ENCODE measurements at regions of chr6 and their contacts with region 1.

Region 1: GRCh38 chr6:89371849-89372505 is 19.5 kb upstream of the UBE2J1 start:
- DNase-seq: peak; percentile 90
- ATAC-seq: peak; percentile 88
- H3K4me3 ChIP-seq: no peak overlapping the region
- H3K4me3 Mint-ChIP-seq: peak overlapping the region; percentile 18
- H3K27ac ChIP-seq: peak overlapping the region; percentile 17 to 18
- H3K27ac Mint-ChIP-seq: peak overlapping the region; percentile 53
- H3K4me1 ChIP-seq: peaks cover 23 to 37% of the 10 kb centered on the region in 2 donors
- H3K4me1 Mint-ChIP-seq: peaks cover 39% of the 10 kb centered on the region
- H3K27me3 ChIP-seq: no peaks in the 10 kb centered on the region
- H3K27me3 Mint-ChIP-seq: no peaks in the 10 kb centered on the region
- CTCF ChIP-seq: peak; percentile 98

Region 2: DNA sequence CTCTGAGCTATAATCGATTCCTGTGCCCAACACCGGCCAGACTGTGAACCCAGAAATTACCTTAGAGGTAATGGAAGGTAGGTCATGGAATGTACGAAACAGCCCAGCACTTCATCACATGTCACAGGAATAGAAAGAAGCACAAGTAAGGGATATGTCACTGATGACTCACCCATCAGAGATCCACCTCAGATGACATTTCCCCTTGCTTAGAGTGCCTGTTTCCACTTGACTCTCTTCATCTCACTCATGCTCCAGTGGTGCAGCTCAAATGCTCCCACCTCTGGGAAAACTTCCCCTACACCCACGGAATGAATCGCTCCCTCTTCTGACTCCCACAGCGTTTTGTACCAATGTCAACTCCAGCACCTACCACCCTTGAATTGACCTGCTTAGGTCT is 824.2 kb before region 1 on chr6:
- CTCF ChIA-PET with region 1: no interaction called
- POLR2A ChIA-PET with region 1: no interaction called
- intact Hi-C with region 1: no loop called
- DNase-seq: no peak
- ATAC-seq: no peak
- H3K4me3 ChIP-seq: no peak overlapping the region
- H3K4me3 Mint-ChIP-seq: no peak overlapping the region
- H3K27ac ChIP-seq: no peak overlapping the region
- H3K27ac Mint-ChIP-seq: no peak overlapping the region
- H3K4me1 ChIP-seq: peaks cover 5 to 6% of the 10 kb centered on the region in 2 donors
- H3K4me1 Mint-ChIP-seq: peaks cover 5% of the 10 kb centered on the region
- H3K27me3 ChIP-seq: no peaks in the 10 kb centered on the region
- H3K27me3 Mint-ChIP-seq: no peaks in the 10 kb centered on the region
- CTCF ChIP-seq: no peak

Region 3: GRCh38 chr6:88843040-88843439 is 528.9 kb before region 1 on chr6:
- CTCF ChIA-PET with region 1: no interaction called
- POLR2A ChIA-PET with region 1: no interaction called
- intact Hi-C with region 1: no loop called
- DNase-seq: no peak
- ATAC-seq: no peak
- H3K4me3 ChIP-seq: no peak overlapping the region
- H3K4me3 Mint-ChIP-seq: no peak overlapping the region
- H3K27ac ChIP-seq: no peak overlapping the region
- H3K27ac Mint-ChIP-seq: no peak overlapping the region
- H3K4me1 ChIP-seq: no peaks in the 10 kb centered on the region
- H3K4me1 Mint-ChIP-seq: no peaks in the 10 kb centered on the region
- H3K27me3 ChIP-seq: no peaks in the 10 kb centered on the region
- H3K27me3 Mint-ChIP-seq: no peaks in the 10 kb centered on the region
- CTCF ChIP-seq: no peak

Region 4: DNA sequence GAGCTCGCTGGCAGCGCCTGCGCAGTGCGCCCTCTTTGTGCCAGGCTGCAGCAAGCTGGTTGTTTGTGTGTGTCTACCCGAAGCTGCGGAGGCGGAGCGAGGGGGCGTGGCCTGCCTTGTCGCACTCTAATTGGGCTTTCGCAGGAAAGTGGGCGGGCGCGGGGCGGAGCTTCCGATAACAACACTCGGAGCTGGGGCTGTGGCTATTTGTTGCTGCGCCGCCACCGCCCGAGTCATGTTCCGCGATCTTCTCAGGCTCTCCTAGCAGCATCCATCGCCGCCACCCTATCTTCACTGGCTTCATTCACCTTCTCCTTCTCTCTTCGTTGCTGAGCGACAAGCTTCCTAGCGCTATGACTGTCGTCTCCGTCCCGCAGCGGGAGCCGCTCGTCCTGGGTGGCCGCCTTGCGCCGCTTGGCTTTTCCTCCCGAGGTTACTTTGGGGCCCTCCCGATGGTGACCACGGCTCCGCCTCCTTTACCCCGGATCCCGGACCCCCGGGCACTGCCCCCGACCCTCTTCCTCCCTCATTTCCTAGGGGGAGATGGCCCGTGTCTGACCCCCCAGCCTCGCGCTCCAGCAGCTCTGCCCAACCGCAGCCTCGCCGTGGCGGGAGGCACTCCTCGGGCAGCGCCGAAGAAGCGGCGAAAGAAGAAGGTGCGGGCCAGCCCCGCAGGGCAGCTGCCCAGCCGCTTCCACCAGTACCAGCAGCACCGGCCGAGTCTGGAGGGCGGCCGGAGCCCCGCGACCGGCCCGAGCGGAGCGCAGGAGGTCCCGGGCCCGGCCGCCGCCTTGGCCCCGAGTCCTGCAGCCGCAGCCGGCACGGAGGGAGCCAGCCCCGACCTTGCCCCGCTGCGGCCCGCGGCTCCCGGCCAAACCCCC is 291.2 kb before region 1 on chr6 and contains the start of gene PNRC1:
- CTCF ChIA-PET with region 1: interaction called, 8 read pairs
- POLR2A ChIA-PET with region 1: no interaction called
- intact Hi-C with region 1: loop called (anchors 5 kb)
- DNase-seq: peak; percentile 100
- ATAC-seq: peak; percentile 76
- H3K4me3 ChIP-seq: peak within 1 kb of the TSS; percentile 81 to 100 (median 98)
- H3K4me3 Mint-ChIP-seq: peak within 1 kb of the TSS; percentile 99
- H3K27ac ChIP-seq: peak within 1 kb of the TSS; percentile 99
- H3K27ac Mint-ChIP-seq: peak within 1 kb of the TSS; percentile 98
- H3K4me1 ChIP-seq: peaks cover 25 to 29% of the 10 kb centered on the region in 2 donors
- H3K4me1 Mint-ChIP-seq: peaks cover 38% of the 10 kb centered on the region
- H3K27me3 ChIP-seq: no peaks in the 10 kb centered on the region
- H3K27me3 Mint-ChIP-seq: no peaks in the 10 kb centered on the region
- CTCF ChIP-seq: no peak
- total RNA-seq, gene PNRC1: 460 and 486 TPM in 2 replicates

Region 5: GRCh38 chr6:89360415-89360999 is 11.5 kb before region 1 on chr6:
- CTCF ChIA-PET with region 1: interaction called, 141 read pairs
- POLR2A ChIA-PET with region 1: interaction called, 6 read pairs
- intact Hi-C with region 1: loop called (anchors 1 kb)
- DNase-seq: no peak
- ATAC-seq: no peak
- H3K4me3 ChIP-seq: no peak overlapping the region
- H3K4me3 Mint-ChIP-seq: peak overlapping the region; percentile 8
- H3K27ac ChIP-seq: peak overlapping the region in 1 of 2 donors; percentile 22
- H3K27ac Mint-ChIP-seq: peak overlapping the region; percentile 80
- H3K4me1 ChIP-seq: peaks cover 47 to 65% of the 10 kb centered on the region in 2 donors
- H3K4me1 Mint-ChIP-seq: peaks cover 75% of the 10 kb centered on the region
- H3K27me3 ChIP-seq: no peaks in the 10 kb centered on the region
- H3K27me3 Mint-ChIP-seq: no peaks in the 10 kb centered on the region
- CTCF ChIP-seq: no peak

Region 6: DNA sequence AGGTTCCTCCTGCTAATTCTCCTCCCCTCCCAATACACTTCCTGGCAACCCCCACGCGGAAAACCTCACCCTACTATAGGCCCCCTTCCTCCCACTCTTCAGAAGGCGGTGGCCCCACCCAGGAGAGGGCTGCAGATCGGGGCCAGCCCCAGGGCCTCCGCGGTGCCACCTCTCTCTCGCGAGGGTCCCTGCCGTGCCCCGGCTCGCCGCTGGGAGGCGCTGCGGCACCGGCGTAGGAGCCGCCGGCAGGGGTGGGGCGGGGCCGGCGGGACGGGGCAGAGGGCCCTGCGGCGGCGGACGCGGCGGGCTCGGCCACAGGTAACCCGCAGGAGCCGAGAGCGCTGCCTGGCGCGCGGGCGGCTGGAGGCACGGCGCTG is 60.9 kb after region 1 on chr6 and contains the start of gene ANKRD6:
- CTCF ChIA-PET with region 1: interaction called, 10 read pairs
- POLR2A ChIA-PET with region 1: no interaction called
- intact Hi-C with region 1: loop called (anchors 5 kb)
- DNase-seq: peak; percentile 87
- ATAC-seq: peak; percentile 98
- H3K4me3 ChIP-seq: peak within 1 kb of the TSS; percentile 34 to 72 (median 69)
- H3K4me3 Mint-ChIP-seq: peak within 1 kb of the TSS; percentile 92
- H3K27ac ChIP-seq: no peak within 1 kb of the TSS
- H3K27ac Mint-ChIP-seq: peak within 1 kb of the TSS; percentile 60
- H3K4me1 ChIP-seq: peaks cover 10 to 12% of the 10 kb centered on the region in 2 donors
- H3K4me1 Mint-ChIP-seq: peaks cover 13% of the 10 kb centered on the region
- H3K27me3 ChIP-seq: no peaks in the 10 kb centered on the region
- H3K27me3 Mint-ChIP-seq: peaks cover 4% of the 10 kb centered on the region
- CTCF ChIP-seq: peak; percentile 83
- total RNA-seq, gene ANKRD6: 10.5 and 15.0 TPM in 2 replicates

Region 7: GRCh38 chr6:89643406-89643805 is 271.4 kb after region 1 on chr6:
- CTCF ChIA-PET with region 1: no interaction called
- POLR2A ChIA-PET with region 1: no interaction called
- intact Hi-C with region 1: no loop called
- DNase-seq: no peak
- ATAC-seq: no peak
- H3K4me3 ChIP-seq: no peak overlapping the region
- H3K4me3 Mint-ChIP-seq: no peak overlapping the region
- H3K27ac ChIP-seq: no peak overlapping the region
- H3K27ac Mint-ChIP-seq: no peak overlapping the region
- H3K4me1 ChIP-seq: peaks cover 8% of the 10 kb centered on the region in 2 donors
- H3K4me1 Mint-ChIP-seq: peaks cover 13% of the 10 kb centered on the region
- H3K27me3 ChIP-seq: no peaks in the 10 kb centered on the region
- H3K27me3 Mint-ChIP-seq: no peaks in the 10 kb centered on the region
- CTCF ChIP-seq: no peak